ENCODE measurements at regions of chr20 and their contacts with region 1.

Region 1: DNA sequence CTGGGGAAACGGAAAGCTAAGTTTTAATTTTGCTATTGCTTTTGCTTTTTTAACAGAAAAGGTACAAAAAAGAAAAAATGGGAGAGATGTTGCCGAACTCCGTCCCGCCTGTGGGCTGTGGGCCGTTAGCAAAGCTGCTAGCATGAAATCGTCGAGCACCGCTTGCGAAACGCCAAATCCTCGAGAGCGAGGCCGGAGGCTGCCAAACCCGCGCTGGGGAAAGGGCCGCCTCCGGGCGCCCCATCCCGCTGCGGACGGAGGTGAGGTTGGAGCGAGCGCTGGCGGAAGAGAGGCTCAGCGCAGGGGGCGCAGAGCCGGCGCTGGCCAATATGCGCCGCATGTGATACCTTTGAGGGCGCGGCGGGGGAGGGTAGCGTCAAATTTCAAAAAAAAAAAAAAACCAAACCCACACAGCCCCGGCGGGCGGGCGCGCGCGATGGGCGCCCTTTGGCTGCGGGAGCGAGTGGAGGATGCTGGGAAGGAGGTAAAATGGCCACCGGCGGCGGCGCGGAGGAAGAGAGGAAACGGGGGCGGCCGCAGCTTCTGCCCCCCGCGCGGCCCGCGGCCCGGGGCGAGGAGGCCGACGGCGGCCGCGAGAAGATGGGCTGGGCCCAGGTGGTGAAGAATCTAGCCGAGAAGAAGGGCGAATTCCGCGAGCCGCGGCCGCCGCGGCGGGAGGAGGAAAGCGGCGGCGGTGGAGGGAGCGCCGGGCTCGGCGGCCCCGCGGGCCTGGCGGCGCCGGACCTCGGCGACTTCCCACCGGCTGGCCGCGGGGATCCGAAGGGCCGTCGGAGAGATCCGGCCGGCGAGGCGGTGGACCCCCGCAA is at the start of gene ZCCHC3:
- DNase-seq: peak; percentile 96
- H3K4me3 Mint-ChIP-seq: peak within 1 kb of the TSS; percentile 98
- H3K27ac Mint-ChIP-seq: peak within 1 kb of the TSS; percentile 100
- H3K4me1 Mint-ChIP-seq: peaks cover 40% of the 10 kb centered on the region
- H3K27me3 Mint-ChIP-seq: peaks cover 1% of the 10 kb centered on the region
- total RNA-seq, gene ZCCHC3: 23.7 and 24.6 TPM in 2 replicates

Region 2: GRCh38 chr20:157154-157553 is 140.2 kb before region 1 on chr20 and contains the start of gene DEFB127:
- intact Hi-C with region 1: no loop called
- DNase-seq: no peak
- H3K4me3 Mint-ChIP-seq: no peak within 1 kb of the TSS
- H3K27ac Mint-ChIP-seq: no peak within 1 kb of the TSS
- H3K4me1 Mint-ChIP-seq: no peaks in the 10 kb centered on the region
- H3K27me3 Mint-ChIP-seq: peaks cover 24% of the 10 kb centered on the region
- total RNA-seq, gene DEFB127: not detected in 2 replicates

Region 3: GRCh38 chr20:227439-228105 is 69.7 kb before region 1 on chr20:
- intact Hi-C with region 1: no loop called
- DNase-seq: peak; percentile 56
- H3K4me3 Mint-ChIP-seq: no peak overlapping the region
- H3K27ac Mint-ChIP-seq: peak overlapping the region; percentile 65
- H3K4me1 Mint-ChIP-seq: peaks cover 14% of the 10 kb centered on the region
- H3K27me3 Mint-ChIP-seq: peaks cover 14% of the 10 kb centered on the region

Region 4: GRCh38 chr20:266596-267562 is 30.4 kb before region 1 on chr20:
- intact Hi-C with region 1: no loop called
- DNase-seq: peak; percentile 96
- H3K4me3 Mint-ChIP-seq: peak overlapping the region; percentile 80
- H3K27ac Mint-ChIP-seq: peak overlapping the region; percentile 42
- H3K4me1 Mint-ChIP-seq: peaks cover 11% of the 10 kb centered on the region
- H3K27me3 Mint-ChIP-seq: peaks cover 10% of the 10 kb centered on the region

Region 5: DNA sequence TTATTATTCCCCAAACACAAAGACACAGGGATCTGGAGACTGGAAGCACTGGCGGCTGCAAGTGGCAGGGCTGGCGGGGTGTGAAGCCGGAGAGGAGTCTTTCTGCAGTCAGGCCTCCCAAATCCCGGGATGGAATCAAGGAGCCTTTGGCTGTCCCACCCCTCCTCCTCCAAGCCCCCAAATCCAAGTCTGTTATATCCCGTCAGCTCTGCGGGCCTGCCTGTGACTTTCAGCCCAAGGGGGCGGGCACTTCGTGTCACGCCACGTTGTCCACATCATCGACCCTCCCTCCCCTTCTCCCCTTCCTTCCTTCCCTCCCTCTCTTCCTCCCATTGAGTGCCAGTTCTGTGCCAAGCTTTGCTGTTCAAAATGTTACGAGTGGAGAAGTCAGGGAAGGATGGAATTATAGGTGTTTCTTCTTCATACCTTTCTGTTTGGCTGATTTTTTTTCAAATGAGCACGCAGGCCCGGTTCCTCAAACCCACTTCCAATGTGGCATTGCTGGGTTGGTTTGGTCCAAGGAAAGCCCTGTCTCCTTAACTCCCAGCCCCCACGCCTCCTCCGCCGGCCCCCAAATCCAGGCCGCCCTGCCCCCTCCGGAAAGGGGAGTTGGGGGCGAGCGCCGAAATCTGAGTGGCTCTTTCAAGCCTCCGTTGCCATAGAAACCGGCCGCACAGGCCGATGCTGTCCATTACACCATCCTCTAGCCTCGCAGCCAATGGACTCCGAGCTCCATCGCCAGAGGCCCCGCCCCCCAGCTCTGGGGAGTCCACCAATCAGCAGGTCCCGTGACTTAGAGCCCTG is 12.7 kb after region 1 on chr20:
- intact Hi-C with region 1: loop called (anchors 1 kb)
- DNase-seq: peak; percentile 95
- H3K4me3 Mint-ChIP-seq: peak overlapping the region; percentile 81
- H3K27ac Mint-ChIP-seq: peak overlapping the region; percentile 89
- H3K4me1 Mint-ChIP-seq: peaks cover 10% of the 10 kb centered on the region
- H3K27me3 Mint-ChIP-seq: no peaks in the 10 kb centered on the region

Region 6: DNA sequence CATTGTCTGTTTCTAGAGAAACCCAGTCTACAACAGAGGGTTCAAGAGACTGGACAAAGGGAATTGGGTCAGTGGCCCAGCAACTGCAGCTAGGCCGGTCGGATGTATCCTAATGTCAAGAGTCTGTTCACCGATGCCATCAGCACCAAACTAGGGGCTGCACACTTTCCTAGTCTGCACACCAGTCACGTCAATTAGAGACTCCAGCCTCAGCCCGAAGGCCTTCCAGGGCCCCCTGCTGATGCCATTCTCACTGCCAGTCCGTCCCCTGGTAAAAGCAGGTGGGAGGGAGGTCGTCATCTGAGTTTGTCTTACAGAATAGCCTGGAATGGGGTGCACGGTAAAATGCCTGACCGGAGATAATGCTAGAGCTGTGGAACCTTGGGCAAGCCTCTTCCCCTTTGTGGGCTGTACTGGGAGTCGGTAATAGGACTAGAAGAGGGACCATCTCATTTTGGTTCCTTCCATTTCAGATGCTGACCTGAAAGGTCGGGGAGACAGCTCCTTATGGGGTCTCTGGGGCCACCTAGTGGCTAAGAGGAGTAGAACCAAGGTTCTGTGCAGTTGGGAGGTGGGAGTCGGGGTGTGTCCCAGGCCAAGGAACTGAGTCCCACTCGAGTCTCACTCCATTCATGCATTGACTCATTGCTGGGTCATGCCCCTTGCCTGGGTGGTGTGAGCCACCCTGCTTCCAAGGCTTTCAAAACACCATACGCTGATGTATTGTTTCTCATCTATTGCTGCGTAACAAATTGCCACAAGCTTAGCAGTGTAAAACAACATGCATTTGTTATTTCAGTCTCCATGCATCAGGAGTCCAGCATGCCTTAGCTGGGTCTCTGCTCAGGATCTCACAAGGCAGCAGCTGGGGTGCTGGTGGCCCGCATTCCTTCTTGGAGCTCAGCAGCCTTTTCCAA is 33.2 kb after region 1 on chr20:
- intact Hi-C with region 1: loop called (anchors 1 kb)
- DNase-seq: peak; percentile 88
- H3K4me3 Mint-ChIP-seq: no peak overlapping the region
- H3K27ac Mint-ChIP-seq: peak overlapping the region; percentile 12
- H3K4me1 Mint-ChIP-seq: peaks cover 15% of the 10 kb centered on the region
- H3K27me3 Mint-ChIP-seq: peaks cover 2% of the 10 kb centered on the region

Region 7: GRCh38 chr20:354298-355064 is 57.2 kb after region 1 on chr20:
- intact Hi-C with region 1: no loop called
- DNase-seq: peak; percentile 95
- H3K4me3 Mint-ChIP-seq: no peak overlapping the region
- H3K27ac Mint-ChIP-seq: no peak overlapping the region
- H3K4me1 Mint-ChIP-seq: peaks cover 4% of the 10 kb centered on the region
- H3K27me3 Mint-ChIP-seq: no peaks in the 10 kb centered on the region